ENCODE measurements at regions of chr15 and their contacts with region 1.

Region 1: GRCh38 chr15:94230956-94231722 is at the start of gene MCTP2:
- DNase-seq: peak; percentile 86 to 91
- H3K4me3 ChIP-seq: peak within 1 kb of the TSS; percentile 72
- H3K4me3 Mint-ChIP-seq: peak within 1 kb of the TSS; percentile 75
- H3K27ac Mint-ChIP-seq: peak within 1 kb of the TSS; percentile 73
- H3K4me1 ChIP-seq: 0 out of 2 replicates have a peak, but pooled peaks cover 5% of the 10 kb centered on the region
- H3K4me1 Mint-ChIP-seq: no peaks in the 10 kb centered on the region
- H3K27me3 ChIP-seq: no peaks in the 10 kb centered on the region
- H3K27me3 Mint-ChIP-seq: no peaks in the 10 kb centered on the region
- CTCF ChIP-seq: peak in 1 of 2 experiments; percentile 36
- total RNA-seq, gene MCTP2: 9.9 and 10.9 TPM in 2 replicates

Region 2: GRCh38 chr15:94247789-94248638 is 16.9 kb after region 1 on chr15:
- CTCF ChIA-PET with region 1: interaction called, 4 read pairs
- POLR2A ChIA-PET with region 1: no interaction called
- intact Hi-C with region 1: loop called (anchors 1 kb)
- DNase-seq: peak; percentile 60 to 63
- H3K4me3 ChIP-seq: peak overlapping the region; percentile 26
- H3K4me3 Mint-ChIP-seq: peak overlapping the region; percentile 28
- H3K27ac Mint-ChIP-seq: peak overlapping the region; percentile 55
- H3K4me1 ChIP-seq: peaks cover 35% of the 10 kb centered on the region
- H3K4me1 Mint-ChIP-seq: peaks cover 32% of the 10 kb centered on the region
- H3K27me3 ChIP-seq: no peaks in the 10 kb centered on the region
- H3K27me3 Mint-ChIP-seq: no peaks in the 10 kb centered on the region
- CTCF ChIP-seq: no peak

Region 3: DNA sequence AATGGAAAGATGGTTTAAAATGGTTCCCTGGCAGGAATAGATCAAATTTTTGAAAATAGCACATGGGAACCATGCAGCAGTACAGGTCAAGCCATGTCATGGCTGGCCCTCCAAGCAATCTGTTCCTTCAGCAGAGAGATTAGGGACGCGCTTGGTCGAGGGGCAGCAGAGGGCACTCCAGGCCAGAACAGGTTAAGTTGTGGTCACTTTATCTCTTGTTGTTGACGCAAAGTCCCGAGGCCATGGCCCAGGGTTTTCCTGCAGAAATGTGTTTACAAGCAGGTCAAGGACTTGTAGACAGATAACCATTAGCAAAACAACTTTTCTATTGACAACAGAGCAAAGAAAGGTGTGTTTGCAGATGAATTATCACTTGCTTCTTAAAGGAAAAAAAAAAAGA is 1529.4 kb after region 1 on chr15:
- CTCF ChIA-PET with region 1: no interaction called
- POLR2A ChIA-PET with region 1: no interaction called
- intact Hi-C with region 1: no loop called
- DNase-seq: peak; percentile 51 to 66
- H3K4me3 ChIP-seq: no peak overlapping the region
- H3K4me3 Mint-ChIP-seq: no peak overlapping the region
- H3K27ac Mint-ChIP-seq: no peak overlapping the region
- H3K4me1 ChIP-seq: no peaks in the 10 kb centered on the region
- H3K4me1 Mint-ChIP-seq: peaks cover 12% of the 10 kb centered on the region
- H3K27me3 ChIP-seq: no peaks in the 10 kb centered on the region
- H3K27me3 Mint-ChIP-seq: no peaks in the 10 kb centered on the region
- CTCF ChIP-seq: peak; percentile 46 to 50

Measured in Caco-2 (cell line).